ENCODE measurements at regions of chr1 and their contacts with region 1.

Region 1: DNA sequence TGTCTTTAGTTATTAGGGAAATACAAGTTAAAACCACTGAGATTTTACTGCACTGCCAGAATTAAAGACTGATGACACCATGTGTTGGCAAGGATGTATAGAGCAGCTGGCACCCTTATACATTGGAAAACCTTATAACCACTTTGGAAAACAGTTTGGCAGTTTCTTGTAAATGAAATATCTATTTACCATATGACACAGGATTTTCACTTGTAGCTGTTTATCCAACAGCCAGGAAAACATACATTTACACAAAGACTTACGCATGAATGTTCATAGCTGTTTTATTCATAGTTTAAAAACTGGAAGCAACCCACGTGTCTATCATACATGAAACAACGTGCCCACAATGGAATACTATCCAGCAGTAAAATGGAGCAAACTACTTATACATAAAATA is 45.3 kb downstream of the PRRC2C start:
- DNase-seq: no peak
- ATAC-seq: no peak
- H3K4me3 ChIP-seq: no peak overlapping the region
- H3K27ac ChIP-seq: no peak overlapping the region
- H3K4me1 ChIP-seq: no peaks in the 10 kb centered on the region
- H3K27me3 ChIP-seq: no peaks in the 10 kb centered on the region
- CTCF ChIP-seq: no peak
- POLR2A ChIP-seq: no peak

Region 2: GRCh38 chr1:171583581-171584201 is 53.0 kb after region 1 on chr1:
- intact Hi-C with region 1: loop called (anchors 10 kb)
- DNase-seq: no peak
- ATAC-seq: no peak
- H3K4me3 ChIP-seq: no peak overlapping the region
- H3K27ac ChIP-seq: no peak overlapping the region
- H3K4me1 ChIP-seq: peaks cover 1% of the 10 kb centered on the region
- H3K27me3 ChIP-seq: no peaks in the 10 kb centered on the region
- CTCF ChIP-seq: no peak
- POLR2A ChIP-seq: no peak

Measured in body of pancreas (tissue), 4 donors.